ENCODE measurements at regions of chr22 and their contacts with region 1.

Region 1: DNA sequence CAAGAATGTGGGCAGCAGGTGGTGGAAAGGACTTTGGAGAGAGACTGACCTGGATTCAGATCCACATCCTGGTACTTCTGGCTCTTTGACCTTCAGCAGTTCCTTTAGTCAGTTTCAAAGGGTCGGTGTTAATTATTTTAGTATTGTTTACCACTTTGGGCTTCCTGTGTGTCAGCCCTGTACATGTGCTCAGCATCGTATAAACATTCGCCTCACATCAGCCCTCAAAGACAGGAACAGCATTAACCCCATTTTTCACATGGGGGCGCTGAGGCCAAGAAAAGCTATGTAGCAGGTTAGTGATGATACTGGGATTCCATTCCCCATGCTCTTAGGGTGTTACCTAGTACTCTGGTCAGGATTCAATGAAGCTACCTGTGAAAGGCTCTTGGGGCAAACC is 72.1 kb upstream of the YWHAH start:
- DNase-seq: no peak
- CTCF ChIP-seq: peak; percentile 19

Region 2: GRCh38 chr22:31952459-31952858 is 80.2 kb after region 1 on chr22:
- in situ Hi-C with region 1: loop called (anchors 10 kb)
- DNase-seq: no peak
- CTCF ChIP-seq: no peak

Region 3: GRCh38 chr22:32378707-32379272 is 506.6 kb after region 1 on chr22:
- in situ Hi-C with region 1: no loop called
- DNase-seq: no peak
- CTCF ChIP-seq: peak; percentile 31

Measured in GM13977 (cell line).